ENCODE measurements at regions of chr13 and their contacts with region 1.

Region 1: GRCh38 chr13:60369242-60369641 is 27.8 kb upstream of the TDRD3 start:
- DNase-seq: no peak
- ATAC-seq: no peak
- H3K4me3 Mint-ChIP-seq: no peak overlapping the region
- H3K27ac Mint-ChIP-seq: no peak overlapping the region
- H3K4me1 Mint-ChIP-seq: peaks cover 2% of the 10 kb centered on the region
- H3K27me3 Mint-ChIP-seq: no peaks in the 10 kb centered on the region
- CTCF ChIP-seq: peak; percentile 25

Region 2: GRCh38 chr13:60134376-60134775 is 234.9 kb before region 1 on chr13:
- CTCF ChIA-PET with region 1: no interaction called
- POLR2A ChIA-PET with region 1: no interaction called
- intact Hi-C with region 1: no loop called
- DNase-seq: peak; percentile 2
- ATAC-seq: peak; percentile 42
- H3K4me3 Mint-ChIP-seq: no peak overlapping the region
- H3K27ac Mint-ChIP-seq: no peak overlapping the region
- H3K4me1 Mint-ChIP-seq: peaks cover 9% of the 10 kb centered on the region
- H3K27me3 Mint-ChIP-seq: no peaks in the 10 kb centered on the region
- CTCF ChIP-seq: no peak

Region 3: GRCh38 chr13:60379837-60380236 is 10.6 kb after region 1 on chr13:
- CTCF ChIA-PET with region 1: interaction called, 13 read pairs
- POLR2A ChIA-PET with region 1: no interaction called
- intact Hi-C with region 1: no loop called
- DNase-seq: no peak
- ATAC-seq: no peak
- H3K4me3 Mint-ChIP-seq: no peak overlapping the region
- H3K27ac Mint-ChIP-seq: no peak overlapping the region
- H3K4me1 Mint-ChIP-seq: no peaks in the 10 kb centered on the region
- H3K27me3 Mint-ChIP-seq: peaks cover 3% of the 10 kb centered on the region
- CTCF ChIP-seq: peak; percentile 23

Region 4: GRCh38 chr13:60417734-60418133 is 48.5 kb after region 1 on chr13:
- CTCF ChIA-PET with region 1: no interaction called
- POLR2A ChIA-PET with region 1: no interaction called
- intact Hi-C with region 1: no loop called
- DNase-seq: no peak
- ATAC-seq: peak; percentile 78
- H3K4me3 Mint-ChIP-seq: no peak overlapping the region
- H3K27ac Mint-ChIP-seq: peak overlapping the region; percentile 56
- H3K4me1 Mint-ChIP-seq: peaks cover 20% of the 10 kb centered on the region
- H3K27me3 Mint-ChIP-seq: no peaks in the 10 kb centered on the region
- CTCF ChIP-seq: no peak

Measured in activated CD8-positive, alpha-beta T cell treated with anti-CD3 and anti-CD28 coated beads for 36 hours (primary cell).